Adrenal gland (tissue), 19 donors: ENCODE measurements at regions of chr10 and their contacts with region 1.

Region 1: GRCh38 chr10:4013651-4014121 is 228.7 kb upstream of the KLF6 start:
- DNase-seq: no peak
- H3K4me3 ChIP-seq: no peak overlapping the region
- H3K27ac ChIP-seq: no peak overlapping the region
- H3K4me1 ChIP-seq: no peaks in the 10 kb centered on the region
- H3K27me3 ChIP-seq: no peaks in the 10 kb centered on the region
- CTCF ChIP-seq: no peak
- POLR2A ChIP-seq: no peak

Region 2: DNA sequence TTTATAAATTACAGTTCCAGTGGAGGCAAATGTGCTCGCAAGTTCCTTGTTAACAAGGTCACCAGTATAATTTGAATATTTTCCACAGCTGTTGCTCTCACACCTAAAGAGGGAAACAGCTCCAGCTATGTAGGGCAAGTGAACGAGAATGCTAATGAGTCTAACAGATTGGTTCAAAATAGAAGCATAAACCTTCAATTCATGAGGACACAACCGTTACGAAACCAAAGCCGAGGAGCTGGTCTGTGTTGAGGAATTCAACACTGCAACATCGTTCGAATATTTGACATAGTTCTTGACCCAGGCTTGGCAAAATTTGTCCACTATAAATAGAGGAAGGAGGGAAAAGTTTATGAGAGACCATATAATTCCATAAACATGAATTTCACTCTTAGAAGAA is 389.9 kb before region 1 on chr10:
- intact Hi-C with region 1: loop called in 1 of 2 experiments (anchors 10 kb)
- DNase-seq: peak in 1 of 7 donors; percentile 3
- H3K4me3 ChIP-seq: no peak overlapping the region
- H3K27ac ChIP-seq: no peak overlapping the region
- H3K4me1 ChIP-seq: no peaks in the 10 kb centered on the region
- H3K27me3 ChIP-seq: no peaks in the 10 kb centered on the region
- CTCF ChIP-seq: no peak
- POLR2A ChIP-seq: no peak